CD4-positive, alpha-beta T cell (primary cell): ENCODE measurements at regions of chr4 and their contacts with region 1.

Region 1: GRCh38 chr4:41214136-41214824 is at the start of gene APBB2:
- DNase-seq: peak in 10 of 14 experiments; percentile 5 to 64 (median 16)
- ATAC-seq: peak; percentile 38
- H3K4me3 ChIP-seq: peak within 1 kb of the TSS; percentile 55
- H3K4me3 Mint-ChIP-seq: peak within 1 kb of the TSS; percentile 78
- H3K27ac ChIP-seq: no peak within 1 kb of the TSS
- H3K27ac Mint-ChIP-seq: no peak within 1 kb of the TSS
- H3K4me1 ChIP-seq: peaks cover 24% of the 10 kb centered on the region
- H3K4me1 Mint-ChIP-seq: peaks cover 30% of the 10 kb centered on the region
- H3K27me3 ChIP-seq: peaks cover 35 to 56% of the 10 kb centered on the region in 2 experiments
- H3K27me3 Mint-ChIP-seq: peaks cover 80% of the 10 kb centered on the region
- CTCF ChIP-seq: no peak
- total RNA-seq, gene APBB2: 0.22 TPM in 1 of 2 experiments, not detected in the other

Region 2: GRCh38 chr4:40924793-40925117 is 289.5 kb before region 1 on chr4:
- CTCF ChIA-PET with region 1: no interaction called
- POLR2A ChIA-PET with region 1: no interaction called
- intact Hi-C with region 1: loop called (anchors 5 kb)
- DNase-seq: no peak
- ATAC-seq: no peak
- H3K4me3 ChIP-seq: no peak overlapping the region
- H3K4me3 Mint-ChIP-seq: no peak overlapping the region
- H3K27ac ChIP-seq: no peak overlapping the region
- H3K27ac Mint-ChIP-seq: no peak overlapping the region
- H3K4me1 ChIP-seq: no peaks in the 10 kb centered on the region
- H3K4me1 Mint-ChIP-seq: no peaks in the 10 kb centered on the region
- H3K27me3 ChIP-seq: no peaks in the 10 kb centered on the region
- H3K27me3 Mint-ChIP-seq: peaks cover 29% of the 10 kb centered on the region
- CTCF ChIP-seq: peak; percentile 6

Region 3: DNA sequence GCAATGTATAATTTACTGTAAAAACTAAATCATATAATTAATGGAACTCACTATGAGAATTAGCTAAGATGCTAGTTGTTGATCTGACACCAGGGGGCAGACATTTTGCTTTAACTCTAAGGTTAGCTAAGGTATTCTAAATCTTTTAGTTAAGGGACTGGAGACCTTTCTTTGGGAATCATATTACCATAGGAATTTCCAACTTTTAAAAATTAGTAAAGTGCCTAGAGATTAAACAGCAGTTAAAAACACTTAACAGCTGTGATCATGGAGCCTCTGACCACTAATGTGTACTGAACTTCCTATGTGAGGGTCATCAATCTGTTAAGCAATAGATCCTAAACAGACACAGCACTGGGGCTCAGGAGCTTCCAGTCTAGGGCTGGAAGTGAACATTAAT is 237.9 kb before region 1 on chr4:
- CTCF ChIA-PET with region 1: no interaction called
- POLR2A ChIA-PET with region 1: no interaction called
- intact Hi-C with region 1: loop called in 1 of 2 experiments (anchors 10 kb)
- DNase-seq: peak in 2 of 14 experiments; percentile 9 to 20
- ATAC-seq: no peak
- H3K4me3 ChIP-seq: no peak overlapping the region
- H3K4me3 Mint-ChIP-seq: no peak overlapping the region
- H3K27ac ChIP-seq: no peak overlapping the region
- H3K27ac Mint-ChIP-seq: no peak overlapping the region
- H3K4me1 ChIP-seq: no peaks in the 10 kb centered on the region
- H3K4me1 Mint-ChIP-seq: no peaks in the 10 kb centered on the region
- H3K27me3 ChIP-seq: peaks cover 0 to 2% of the 10 kb centered on the region in 2 experiments
- H3K27me3 Mint-ChIP-seq: peaks cover 24% of the 10 kb centered on the region
- CTCF ChIP-seq: no peak

Region 4: DNA sequence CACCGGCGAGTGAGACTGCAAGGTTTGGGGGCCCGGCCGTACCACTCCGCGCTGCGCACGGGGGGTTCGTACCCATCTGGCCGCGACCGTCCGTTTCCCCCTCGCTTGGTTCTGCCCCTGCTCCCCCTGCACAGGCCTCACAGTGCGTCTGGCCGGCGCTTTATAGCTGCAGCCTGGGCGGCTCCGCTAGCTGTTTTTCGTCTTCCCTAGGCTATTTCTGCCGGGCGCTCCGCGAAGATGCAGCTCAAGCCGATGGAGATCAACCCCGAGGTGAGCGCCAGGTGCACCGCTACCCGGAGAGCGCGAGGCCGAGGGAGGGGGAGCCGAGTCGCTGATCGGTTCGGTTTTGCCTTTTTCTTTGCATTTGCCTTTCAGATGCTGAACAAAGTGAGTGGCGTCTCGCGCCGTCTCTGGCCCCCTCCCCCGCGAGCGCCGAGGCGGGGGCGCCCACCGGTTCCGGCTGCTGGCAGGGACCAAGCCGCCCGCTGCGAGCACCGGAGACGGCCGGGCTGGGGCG is 42.5 kb after region 1 on chr4 and contains the start of gene UCHL1:
- CTCF ChIA-PET with region 1: no interaction called
- POLR2A ChIA-PET with region 1: no interaction called
- intact Hi-C with region 1: no loop called
- DNase-seq: no peak
- ATAC-seq: no peak
- H3K4me3 ChIP-seq: no peak within 1 kb of the TSS
- H3K4me3 Mint-ChIP-seq: peak within 1 kb of the TSS; percentile 72
- H3K27ac ChIP-seq: no peak within 1 kb of the TSS
- H3K27ac Mint-ChIP-seq: no peak within 1 kb of the TSS
- H3K4me1 ChIP-seq: peaks cover 11% of the 10 kb centered on the region
- H3K4me1 Mint-ChIP-seq: peaks cover 19% of the 10 kb centered on the region
- H3K27me3 ChIP-seq: peaks cover 22 to 60% of the 10 kb centered on the region in 2 experiments
- H3K27me3 Mint-ChIP-seq: peaks cover 74% of the 10 kb centered on the region
- CTCF ChIP-seq: no peak
- total RNA-seq, gene UCHL1: not detected